ENCODE measurements at regions of chr1 and their contacts with region 1.

Region 1: DNA sequence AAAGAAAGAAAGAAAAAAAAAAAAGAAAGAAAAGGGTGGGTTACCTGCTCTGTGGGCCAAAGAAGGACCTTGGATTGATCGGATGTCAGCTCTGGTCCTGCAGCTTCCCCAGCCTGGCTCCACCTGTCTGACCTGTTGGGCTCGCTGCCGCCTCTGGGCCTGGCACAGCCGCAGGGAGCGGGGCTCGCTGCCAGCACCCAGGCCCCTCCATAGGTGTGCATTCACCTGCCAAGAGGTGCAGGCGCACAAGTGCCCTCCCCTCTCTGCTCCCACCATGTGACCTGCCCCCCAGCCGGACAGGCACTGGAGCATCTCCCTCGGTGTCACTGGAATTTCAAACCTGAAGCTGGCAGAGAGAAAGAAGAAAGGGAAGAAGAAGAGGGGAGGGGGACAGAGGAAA is 33.1 kb upstream of the GPR157 start:
- DNase-seq: peak; percentile 65
- H3K4me3 Mint-ChIP-seq: peak overlapping the region; percentile 45
- H3K27ac Mint-ChIP-seq: peak overlapping the region; percentile 79
- H3K4me1 Mint-ChIP-seq: peaks cover 13% of the 10 kb centered on the region
- H3K27me3 Mint-ChIP-seq: no peaks in the 10 kb centered on the region
- CTCF ChIP-seq: no peak

Region 2: GRCh38 chr1:9128520-9129265 is 33.3 kb before region 1 on chr1 and contains the start of gene GPR157:
- CTCF ChIA-PET with region 1: interaction called, 12 read pairs
- intact Hi-C with region 1: no loop called
- DNase-seq: peak; percentile 84
- H3K4me3 Mint-ChIP-seq: peak within 1 kb of the TSS; percentile 93
- H3K27ac Mint-ChIP-seq: peak within 1 kb of the TSS; percentile 78
- H3K4me1 Mint-ChIP-seq: peaks cover 8% of the 10 kb centered on the region
- H3K27me3 Mint-ChIP-seq: no peaks in the 10 kb centered on the region
- CTCF ChIP-seq: no peak
- total RNA-seq, gene GPR157: 5.4 and 12.5 TPM in 2 replicates

Measured in Calu3 (cell line).